OCI-LY7 (cell line): ENCODE measurements at regions of chr17 and their contacts with region 1.

Region 1: GRCh38 chr17:40443583-40444327 is 505 bp downstream of the IGFBP4 start:
- DNase-seq: peak; percentile 20
- H3K4me3 ChIP-seq: no peak overlapping the region
- H3K27ac ChIP-seq: no peak overlapping the region
- H3K4me1 ChIP-seq: no peaks in the 10 kb centered on the region
- CTCF ChIP-seq: peak; percentile 41; the same call in 1 of the 2 replicates

Region 2: GRCh38 chr17:40362696-40363110 is 81.1 kb before region 1 on chr17:
- CTCF ChIA-PET with region 1: no interaction called
- POLR2A ChIA-PET with region 1: interaction called, 5 read pairs
- intact Hi-C with region 1: loop called (anchors 5 kb)
- DNase-seq: peak; percentile 82
- H3K4me3 ChIP-seq: peak overlapping the region; percentile 53
- H3K27ac ChIP-seq: no peak overlapping the region
- H3K4me1 ChIP-seq: peaks cover 4% of the 10 kb centered on the region
- CTCF ChIP-seq: peak; percentile 83

Region 3: DNA sequence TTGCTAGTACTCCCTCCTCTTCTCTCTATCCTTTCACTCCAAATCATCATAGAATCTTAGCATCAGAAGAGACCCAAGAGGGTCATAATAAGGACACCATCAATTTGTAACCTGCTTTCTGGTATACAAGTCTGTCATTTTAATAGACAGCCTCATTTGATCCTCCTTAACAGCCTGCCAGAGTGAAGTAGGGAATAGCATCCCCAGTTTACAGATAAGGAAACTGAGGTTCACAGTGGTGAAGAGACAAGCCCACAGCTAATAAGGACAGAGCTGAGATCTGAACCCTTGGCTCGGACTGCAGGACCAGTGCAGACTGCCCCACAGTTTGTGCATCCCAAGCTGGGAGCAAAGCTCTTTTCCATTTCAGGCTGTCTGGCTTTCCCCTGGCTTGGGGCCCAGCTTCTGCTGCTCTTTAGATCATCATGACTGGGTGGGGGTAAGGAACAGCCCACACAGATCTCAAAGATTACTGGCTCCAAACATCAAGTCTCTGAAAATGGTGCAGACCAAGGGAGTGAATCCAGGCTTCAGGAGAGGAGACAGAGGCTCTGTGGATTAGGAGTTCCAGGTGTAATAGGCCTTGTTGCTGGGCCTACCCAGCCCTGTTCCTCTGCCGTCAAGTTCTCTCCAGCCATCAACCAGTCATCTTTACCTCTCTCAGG is 10.8 kb before region 1 on chr17:
- CTCF ChIA-PET with region 1: no interaction called
- POLR2A ChIA-PET with region 1: no interaction called
- intact Hi-C with region 1: no loop called
- DNase-seq: no peak
- H3K4me3 ChIP-seq: no peak overlapping the region
- H3K27ac ChIP-seq: no peak overlapping the region
- H3K4me1 ChIP-seq: peaks cover 9% of the 10 kb centered on the region
- CTCF ChIP-seq: no peak

Region 4: DNA sequence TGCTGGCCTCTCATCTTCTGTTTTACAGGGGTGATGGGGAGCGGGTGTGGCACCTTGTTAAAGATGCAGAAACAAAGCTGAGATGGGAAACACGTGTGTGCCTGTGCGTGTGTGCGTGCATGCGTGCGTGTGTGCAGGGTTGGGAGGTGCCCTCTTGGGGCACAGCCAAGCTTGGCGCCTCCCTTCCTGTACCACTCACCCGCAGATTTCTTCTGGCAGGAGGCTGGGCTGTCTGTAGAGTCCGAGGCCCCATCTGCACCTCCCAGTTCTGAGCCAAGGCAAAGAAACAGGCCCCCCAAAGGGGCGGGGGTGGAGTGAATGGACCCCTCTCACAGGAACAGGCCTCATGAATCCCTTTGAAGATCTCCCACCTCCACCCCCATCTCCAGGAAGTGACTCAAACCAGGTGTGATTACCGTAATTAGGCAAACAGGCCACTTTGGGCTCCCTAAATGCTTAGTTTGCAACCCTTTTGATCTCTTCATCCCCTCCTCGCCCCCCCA is 36.8 kb after region 1 on chr17:
- CTCF ChIA-PET with region 1: no interaction called
- POLR2A ChIA-PET with region 1: no interaction called
- intact Hi-C with region 1: loop called (anchors 2 kb)
- DNase-seq: peak; percentile 67
- H3K4me3 ChIP-seq: peak overlapping the region; percentile 19
- H3K27ac ChIP-seq: peak overlapping the region; percentile 4
- H3K4me1 ChIP-seq: peaks cover 18% of the 10 kb centered on the region
- CTCF ChIP-seq: no peak

Region 5: DNA sequence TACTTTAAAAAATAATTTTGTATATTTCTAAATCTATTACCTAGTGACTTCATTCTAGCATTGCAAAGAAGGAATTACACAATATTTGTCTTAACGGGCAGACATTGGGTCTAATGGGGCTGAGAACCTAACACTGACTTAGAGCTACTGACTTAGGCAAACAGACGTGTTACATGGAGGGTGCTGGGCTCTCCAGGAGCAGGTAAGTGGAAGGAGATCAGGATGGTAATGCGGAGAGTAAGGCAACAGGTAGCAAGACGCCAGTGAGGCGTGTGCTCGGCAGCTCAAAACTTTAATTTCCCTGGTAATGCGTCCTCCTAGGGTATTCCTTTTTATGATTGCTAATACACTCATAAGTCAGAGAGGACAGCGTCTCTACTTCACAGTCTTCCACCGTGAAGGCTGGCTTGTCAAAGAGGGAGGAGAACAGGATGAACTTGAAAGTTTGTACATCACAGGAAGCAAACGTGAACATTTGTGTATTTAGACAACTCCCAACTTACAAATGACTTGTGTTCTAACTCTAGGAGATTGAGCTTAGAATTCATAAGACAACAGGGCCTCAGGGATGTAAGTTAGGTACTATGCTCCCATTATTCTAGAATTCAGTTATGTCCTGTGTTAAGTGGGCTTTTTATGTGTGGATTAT is 351.4 kb after region 1 on chr17:
- CTCF ChIA-PET with region 1: no interaction called
- POLR2A ChIA-PET with region 1: no interaction called
- intact Hi-C with region 1: no loop called
- DNase-seq: no peak
- H3K4me3 ChIP-seq: no peak overlapping the region
- H3K27ac ChIP-seq: no peak overlapping the region
- H3K4me1 ChIP-seq: no peaks in the 10 kb centered on the region
- CTCF ChIP-seq: no peak